Lower leg skin (tissue), 4 donors: ENCODE measurements at regions of chr3 and their contacts with region 1.

Region 1: GRCh38 chr3:113838631-113839209 is at the start of gene GRAMD1C:
- DNase-seq: peak; percentile 70 to 96
- H3K4me3 ChIP-seq: peak within 1 kb of the TSS; percentile 21
- CTCF ChIP-seq: no peak
- POLR2A ChIP-seq: no peak
- total RNA-seq, gene GRAMD1C: 23.0 to 38.2 (median 33.2) TPM

Region 2: DNA sequence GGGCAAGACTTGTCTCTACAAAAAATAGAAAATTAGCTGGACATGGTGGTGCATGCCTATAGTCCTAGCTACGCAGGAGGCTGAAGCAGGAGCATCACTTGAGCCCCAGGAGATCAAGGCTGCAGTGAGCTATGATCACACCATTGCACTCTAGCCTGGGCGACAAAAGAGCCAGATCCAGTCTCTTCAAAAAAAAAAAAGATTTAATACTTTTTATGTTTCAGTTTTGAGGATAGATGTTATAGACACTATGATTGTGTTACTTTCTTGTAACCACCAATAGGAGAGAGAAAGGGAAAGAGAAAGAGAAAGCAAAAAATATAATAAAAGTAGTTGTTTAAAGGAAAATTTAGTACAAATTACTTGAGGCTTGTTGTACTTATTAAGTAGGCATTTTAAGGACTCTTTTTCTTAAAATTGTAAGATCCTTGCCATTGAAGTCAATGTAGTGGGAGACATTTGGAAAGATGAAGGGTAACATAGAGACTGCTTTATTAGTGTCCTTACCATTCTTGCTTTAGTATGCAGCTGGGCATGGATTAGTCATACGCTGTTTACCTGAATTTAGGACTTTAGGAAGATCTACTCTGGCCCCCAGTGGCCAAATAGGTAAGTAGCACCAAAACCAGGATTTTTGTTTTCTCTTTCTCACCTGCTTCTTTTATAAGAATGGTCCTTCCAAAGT is 74.0 kb after region 1 on chr3:
- intact Hi-C with region 1: loop called (anchors 2 kb)
- DNase-seq: peak in 1 of 2 donors; percentile 19
- H3K4me3 ChIP-seq: no peak overlapping the region
- CTCF ChIP-seq: no peak
- POLR2A ChIP-seq: no peak

Region 3: DNA sequence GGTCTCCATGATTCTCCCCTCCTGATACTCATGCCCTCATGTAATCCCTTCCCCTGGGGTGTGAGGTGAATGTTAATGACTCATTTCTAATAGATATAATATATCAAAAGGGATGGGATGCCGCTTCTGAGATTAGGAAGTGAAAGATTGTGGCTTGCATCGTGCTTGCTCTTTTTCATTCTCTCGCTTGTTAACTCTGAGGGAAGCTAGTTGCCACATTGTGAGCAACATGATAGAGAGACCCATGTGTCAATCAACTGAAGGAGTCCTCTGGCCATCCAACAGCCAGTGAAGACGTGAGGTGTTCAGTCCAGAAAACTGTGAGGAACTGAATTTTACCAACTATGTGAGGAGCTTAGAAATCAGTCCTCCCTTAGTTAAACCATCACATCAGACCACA is 369.0 kb after region 1 on chr3:
- intact Hi-C with region 1: no loop called
- DNase-seq: no peak
- H3K4me3 ChIP-seq: no peak overlapping the region
- CTCF ChIP-seq: no peak
- POLR2A ChIP-seq: no peak